ENCODE measurements at regions of chr19 and their contacts with region 1.

Region 1: DNA sequence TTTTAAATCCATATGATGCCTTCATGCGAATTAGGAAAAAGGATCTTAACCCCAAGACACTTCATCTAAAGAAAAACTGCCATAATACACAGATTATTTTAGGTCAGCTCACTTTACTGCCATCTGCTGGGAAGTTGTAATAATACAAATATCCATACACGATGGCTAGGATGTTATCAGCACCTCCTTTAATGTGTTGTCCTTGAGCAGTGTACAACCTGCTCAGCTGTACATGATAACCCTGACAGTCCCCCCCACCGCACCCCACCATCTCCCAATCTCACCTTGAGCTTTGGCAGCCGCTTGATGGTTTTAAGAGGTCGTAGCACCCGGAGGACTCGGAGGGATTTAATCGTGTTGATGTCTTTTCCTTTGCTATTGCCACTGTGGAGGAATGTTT is 112.2 kb downstream of the IER2 start:
- H3K4me3 Mint-ChIP-seq: no peak overlapping the region
- H3K27ac Mint-ChIP-seq: no peak overlapping the region
- H3K4me1 Mint-ChIP-seq: peaks cover 22% of the 10 kb centered on the region
- H3K27me3 Mint-ChIP-seq: peaks cover 27% of the 10 kb centered on the region

Region 2: DNA sequence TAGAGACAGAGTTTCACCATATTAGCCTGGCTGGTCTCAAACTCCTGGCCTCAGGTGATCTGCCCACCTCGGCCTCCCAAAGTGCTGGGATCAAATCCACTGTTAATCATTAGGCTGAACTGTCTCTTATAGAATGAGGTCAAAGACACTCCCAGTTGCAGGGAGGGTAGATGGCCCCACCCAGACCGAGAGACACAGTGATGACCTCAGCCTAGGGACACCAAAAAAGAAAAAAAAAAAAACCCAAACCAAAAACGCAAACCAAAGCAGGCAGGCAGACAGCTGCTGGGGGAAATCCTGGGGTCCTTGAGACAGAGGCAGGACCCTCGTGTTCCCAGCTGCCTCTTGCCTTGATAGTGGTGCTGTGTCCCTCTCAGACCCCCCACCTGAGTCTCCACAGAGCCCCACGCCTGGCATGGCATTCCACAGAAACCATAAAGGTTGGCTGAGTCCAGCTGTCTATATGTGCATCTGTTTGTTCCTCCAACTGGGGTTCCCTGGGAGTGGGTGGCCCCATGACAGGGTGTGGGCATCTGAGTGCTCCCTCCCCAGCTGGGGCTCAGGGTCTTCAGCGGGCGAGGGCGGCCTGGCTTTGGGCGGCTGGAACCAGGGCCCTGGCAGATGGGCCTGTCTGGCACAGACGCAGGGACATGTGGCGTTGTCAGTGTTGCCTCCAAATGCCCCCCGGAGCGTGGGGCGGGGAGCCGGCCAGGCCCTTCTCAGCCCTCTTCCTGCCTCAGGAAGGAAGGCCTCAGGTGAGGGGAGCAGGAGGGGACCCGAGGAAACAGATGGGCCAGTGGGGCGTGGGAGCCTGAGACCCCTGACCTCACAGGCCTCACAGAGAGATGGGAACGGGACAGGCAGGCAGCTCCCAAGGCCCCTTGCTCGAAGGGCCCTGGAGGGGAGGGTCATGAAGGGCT is 287.9 kb before region 1 on chr19:
- intact Hi-C with region 1: loop called (anchors 5 kb)
- H3K4me3 Mint-ChIP-seq: no peak overlapping the region
- H3K27ac Mint-ChIP-seq: no peak overlapping the region
- H3K4me1 Mint-ChIP-seq: peaks cover 7% of the 10 kb centered on the region
- H3K27me3 Mint-ChIP-seq: peaks cover 9% of the 10 kb centered on the region

Region 3: DNA sequence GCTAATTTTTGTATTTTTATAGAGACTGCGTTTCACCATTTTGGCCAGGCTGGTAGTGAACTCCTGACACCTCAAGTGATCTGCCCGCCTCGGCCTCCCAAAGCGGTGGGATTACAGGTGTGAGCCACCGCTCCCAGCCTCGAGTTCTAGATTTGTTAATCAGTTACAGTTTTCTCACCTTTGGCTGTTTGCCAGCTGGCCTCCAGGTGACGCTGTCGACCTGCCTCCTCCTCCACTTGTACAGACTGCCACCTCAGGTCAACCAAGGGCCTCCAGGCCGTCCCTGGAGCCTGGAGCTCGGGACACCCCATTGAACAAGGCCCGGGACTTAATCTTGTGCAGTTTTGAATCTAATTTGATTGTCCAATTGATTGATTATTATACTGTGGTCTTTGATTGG is 66.8 kb before region 1 on chr19:
- intact Hi-C with region 1: loop called (anchors 2 kb)
- H3K4me3 Mint-ChIP-seq: no peak overlapping the region
- H3K27ac Mint-ChIP-seq: no peak overlapping the region
- H3K4me1 Mint-ChIP-seq: peaks cover 6% of the 10 kb centered on the region
- H3K27me3 Mint-ChIP-seq: no peaks in the 10 kb centered on the region

Region 4: GRCh38 chr19:13207846-13208671 is 54.4 kb before region 1 on chr19:
- intact Hi-C with region 1: loop called (anchors 5 kb)
- H3K4me3 Mint-ChIP-seq: peak overlapping the region; percentile 74
- H3K27ac Mint-ChIP-seq: peak overlapping the region; percentile 78
- H3K4me1 Mint-ChIP-seq: peaks cover 26% of the 10 kb centered on the region
- H3K27me3 Mint-ChIP-seq: peaks cover 23% of the 10 kb centered on the region